Heart left ventricle (tissue), 16 donors: ENCODE measurements at regions of chr4 and their contacts with region 1.

Region 1: DNA sequence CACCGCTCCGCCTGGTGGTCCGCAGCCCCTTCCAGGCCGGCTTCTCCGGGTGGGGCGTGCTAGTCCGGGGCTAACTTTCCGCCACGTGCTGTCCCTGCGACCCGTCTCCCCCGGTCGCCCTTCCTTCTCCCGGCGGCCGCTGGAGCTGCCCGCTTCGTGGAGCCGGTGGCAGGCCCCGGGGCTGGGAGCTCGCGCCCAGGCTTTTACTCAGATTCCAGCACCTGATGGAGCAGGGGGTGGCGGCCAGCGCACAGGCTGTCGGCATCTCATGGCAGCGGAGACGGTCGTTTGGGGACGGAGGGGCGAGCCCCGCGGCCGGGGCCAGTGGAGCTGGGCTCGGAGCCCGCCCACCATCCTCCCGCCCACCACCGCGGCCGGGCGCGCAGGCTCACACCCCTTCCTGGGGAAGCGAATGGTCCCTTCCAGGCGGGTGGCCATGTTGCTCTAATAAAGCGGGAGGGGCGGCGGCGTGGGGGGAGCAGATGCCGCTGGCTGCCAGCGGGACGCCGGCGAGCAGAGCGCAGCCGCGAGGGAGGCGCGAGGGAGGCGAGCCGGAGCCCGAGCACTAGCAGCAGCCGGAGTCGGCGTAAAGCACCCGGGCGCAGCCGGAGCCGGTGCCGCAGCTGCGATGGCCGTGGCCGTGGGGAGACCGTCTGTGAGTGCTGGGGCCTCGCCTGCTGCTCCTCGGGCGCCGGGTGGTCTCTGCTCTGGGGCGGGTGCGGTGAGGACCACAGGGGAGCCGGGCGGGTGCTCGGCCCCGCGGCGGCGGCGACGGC is at the start of gene SEPTIN11:
- DNase-seq: peak; percentile 94 to 97 (median 95)
- ATAC-seq: peak; percentile 91 to 95 (median 94)
- H3K4me3 ChIP-seq: peak within 1 kb of the TSS; percentile 67 to 98 (median 80)
- H3K27ac ChIP-seq: peak within 1 kb of the TSS; percentile 76 to 97 (median 93)
- H3K4me1 ChIP-seq: peaks cover 0 to 44% (median 21%) of the 10 kb centered on the region in 12 donors
- H3K27me3 ChIP-seq: no peaks in the 10 kb centered on the region
- CTCF ChIP-seq: peak in 1 of 12 donors; percentile 15
- POLR2A ChIP-seq: peak in 1 of 2 donors; percentile 86
- total RNA-seq, gene SEPTIN11: 25.1 to 58.9 (median 36.2) TPM

Region 2: DNA sequence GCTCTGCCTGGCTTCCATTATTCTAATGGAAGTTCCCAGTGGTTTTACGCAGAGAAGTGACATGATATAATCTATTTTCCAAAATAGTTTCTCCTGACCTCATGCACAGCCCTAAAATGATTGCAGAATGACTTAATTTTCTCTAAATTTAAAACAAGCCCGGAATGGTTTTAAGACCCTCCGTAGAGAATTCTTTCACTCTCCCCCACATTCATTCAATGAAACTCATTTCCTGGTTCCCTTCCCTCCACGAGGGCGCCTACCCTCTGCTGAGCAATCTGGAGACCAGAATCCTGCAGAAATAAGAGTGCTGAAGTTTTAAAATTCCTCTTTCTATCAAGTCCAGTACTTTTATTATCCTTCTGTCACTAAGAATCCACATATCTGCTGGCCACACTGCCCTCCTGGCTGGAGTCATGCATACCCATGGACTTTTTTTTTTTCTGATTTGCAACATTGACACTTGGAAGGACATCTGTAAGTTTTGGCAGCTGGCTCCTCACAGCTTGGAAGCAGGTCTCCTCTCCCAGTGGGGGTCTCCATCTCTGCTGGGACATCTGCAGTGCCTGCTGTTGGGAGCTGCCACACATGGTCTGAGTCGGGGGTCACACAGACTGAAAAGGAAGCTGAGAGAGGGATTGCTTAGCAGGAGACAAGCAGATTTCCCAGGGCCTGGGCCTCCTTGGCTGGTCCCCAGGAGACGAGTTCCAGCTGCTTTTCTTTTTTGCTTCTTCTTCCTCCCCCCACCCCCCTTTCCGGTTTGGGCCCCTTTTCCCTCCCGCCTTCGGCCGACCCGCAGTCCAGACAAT is 137.7 kb before region 1 on chr4:
- intact Hi-C with region 1: loop called in 2 of 10 experiments (anchors 5 to 10 kb)
- DNase-seq: peak; percentile 54 to 75 (median 71)
- ATAC-seq: peak; percentile 66 to 87 (median 74)
- H3K4me3 ChIP-seq: peak overlapping the region in 1 of 12 donors; percentile 2
- H3K27ac ChIP-seq: peak overlapping the region in 11 of 12 donors; percentile 30 to 83 (median 65)
- H3K4me1 ChIP-seq: peaks cover 0 to 25% (median 5%) of the 10 kb centered on the region in 12 donors
- H3K27me3 ChIP-seq: no peaks in the 10 kb centered on the region
- CTCF ChIP-seq: peak in 1 of 12 donors; percentile 11
- POLR2A ChIP-seq: no peak

Region 3: DNA sequence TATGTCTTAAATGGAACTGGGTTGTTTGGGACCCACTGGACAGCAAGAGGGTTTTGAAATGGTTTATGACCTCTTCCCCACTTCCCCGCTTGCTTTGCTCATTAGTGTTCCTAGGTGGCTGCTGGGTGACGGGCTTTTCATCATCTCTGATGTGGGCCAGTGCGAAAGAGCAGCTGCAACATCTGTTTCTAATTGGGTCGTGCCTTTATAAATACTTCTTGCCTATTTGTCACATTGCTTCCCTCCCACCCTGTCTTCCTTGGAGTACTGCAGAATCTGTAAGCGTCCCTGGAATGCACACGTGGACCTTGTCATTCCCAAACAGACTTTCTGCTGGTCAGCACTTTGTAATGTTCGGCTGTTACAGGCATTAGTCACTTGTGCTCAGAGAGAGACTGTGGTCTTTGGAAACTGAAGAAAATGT is 35.3 kb after region 1 on chr4:
- intact Hi-C with region 1: loop called in 2 of 10 experiments (anchors 5 kb)
- DNase-seq: peak in 4 of 5 donors; percentile 56 to 74 (median 59)
- ATAC-seq: peak; percentile 76 to 93 (median 90)
- H3K4me3 ChIP-seq: no peak overlapping the region
- H3K27ac ChIP-seq: peak overlapping the region; percentile 15 to 78 (median 58)
- H3K4me1 ChIP-seq: peaks cover 0 to 83% (median 51%) of the 10 kb centered on the region in 12 donors
- H3K27me3 ChIP-seq: no peaks in the 10 kb centered on the region
- CTCF ChIP-seq: no peak
- POLR2A ChIP-seq: no peak

Region 4: GRCh38 chr4:77001907-77002306 is 52.4 kb after region 1 on chr4:
- intact Hi-C with region 1: loop called in 2 of 10 experiments (anchors 5 to 10 kb)
- DNase-seq: no peak
- ATAC-seq: peak in 2 of 4 donors; percentile 44 to 45
- H3K4me3 ChIP-seq: no peak overlapping the region
- H3K27ac ChIP-seq: peak overlapping the region in 4 of 12 donors; percentile 6 to 50 (median 18)
- H3K4me1 ChIP-seq: peaks cover 11 to 34% (median 24%) of the 10 kb centered on the region in 12 donors
- H3K27me3 ChIP-seq: no peaks in the 10 kb centered on the region
- CTCF ChIP-seq: no peak
- POLR2A ChIP-seq: no peak

Region 5: DNA sequence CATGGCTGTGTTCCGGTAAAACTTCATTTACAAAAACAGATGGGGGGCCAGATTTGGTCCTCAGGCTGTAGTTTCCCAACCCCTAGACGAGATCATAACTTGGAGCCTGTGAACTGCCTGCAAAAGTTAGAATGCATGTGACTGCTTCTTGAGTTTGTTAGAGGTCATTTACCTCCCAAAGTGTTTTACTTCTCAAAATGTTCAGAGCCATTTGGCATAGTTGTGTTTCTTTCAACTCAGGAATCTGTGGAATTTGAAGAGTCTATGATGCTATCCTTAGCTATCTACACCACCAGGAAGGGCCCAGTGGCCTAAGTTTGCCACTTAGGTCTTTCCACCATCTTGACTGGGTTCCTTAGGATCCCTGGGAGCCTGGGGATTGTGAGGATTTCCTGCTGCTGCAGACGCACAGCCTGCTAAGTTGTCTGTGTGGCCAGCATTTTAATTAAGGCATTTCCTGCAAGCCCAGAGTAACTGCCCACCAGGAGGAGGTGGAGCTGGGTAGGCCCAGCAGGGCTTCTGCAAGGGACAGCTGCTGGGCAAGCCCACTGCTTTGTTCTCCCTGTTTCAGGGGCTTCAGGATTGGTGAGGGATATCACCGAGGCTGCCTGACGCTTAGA is 73.2 kb after region 1 on chr4:
- intact Hi-C with region 1: no loop called
- DNase-seq: no peak
- ATAC-seq: no peak
- H3K4me3 ChIP-seq: no peak overlapping the region
- H3K27ac ChIP-seq: no peak overlapping the region
- H3K4me1 ChIP-seq: peaks cover 0 to 17% (median 2%) of the 10 kb centered on the region in 12 donors
- H3K27me3 ChIP-seq: no peaks in the 10 kb centered on the region
- CTCF ChIP-seq: no peak
- POLR2A ChIP-seq: no peak

Region 6: GRCh38 chr4:77044461-77045150 is 95.1 kb after region 1 on chr4:
- intact Hi-C with region 1: loop called in 6 of 10 experiments (anchors 5 to 10 kb)
- DNase-seq: no peak
- ATAC-seq: peak in 1 of 4 donors; percentile 29
- H3K4me3 ChIP-seq: no peak overlapping the region
- H3K27ac ChIP-seq: peak overlapping the region in 1 of 12 donors; percentile 25
- H3K4me1 ChIP-seq: peaks cover 0 to 19% (median 0%) of the 10 kb centered on the region in 12 donors
- H3K27me3 ChIP-seq: no peaks in the 10 kb centered on the region
- CTCF ChIP-seq: peak; percentile 40 to 67 (median 54)
- POLR2A ChIP-seq: no peak

Region 7: GRCh38 chr4:77203380-77204197 is 254.1 kb after region 1 on chr4:
- intact Hi-C with region 1: loop called in 1 of 10 experiments (anchors 5 kb)
- DNase-seq: peak in 4 of 5 donors; percentile 44 to 65 (median 54)
- ATAC-seq: peak; percentile 47 to 85 (median 82)
- H3K4me3 ChIP-seq: no peak overlapping the region
- H3K27ac ChIP-seq: no peak overlapping the region
- H3K4me1 ChIP-seq: peaks cover 0 to 4% (median 0%) of the 10 kb centered on the region in 12 donors
- H3K27me3 ChIP-seq: peaks cover 0 to 4% (median 0%) of the 10 kb centered on the region in 9 donors
- CTCF ChIP-seq: peak; percentile 54 to 83 (median 74)
- POLR2A ChIP-seq: no peak